T-cell (primary cell): ENCODE measurements at regions of chr2 and their contacts with region 1.

Region 1: DNA sequence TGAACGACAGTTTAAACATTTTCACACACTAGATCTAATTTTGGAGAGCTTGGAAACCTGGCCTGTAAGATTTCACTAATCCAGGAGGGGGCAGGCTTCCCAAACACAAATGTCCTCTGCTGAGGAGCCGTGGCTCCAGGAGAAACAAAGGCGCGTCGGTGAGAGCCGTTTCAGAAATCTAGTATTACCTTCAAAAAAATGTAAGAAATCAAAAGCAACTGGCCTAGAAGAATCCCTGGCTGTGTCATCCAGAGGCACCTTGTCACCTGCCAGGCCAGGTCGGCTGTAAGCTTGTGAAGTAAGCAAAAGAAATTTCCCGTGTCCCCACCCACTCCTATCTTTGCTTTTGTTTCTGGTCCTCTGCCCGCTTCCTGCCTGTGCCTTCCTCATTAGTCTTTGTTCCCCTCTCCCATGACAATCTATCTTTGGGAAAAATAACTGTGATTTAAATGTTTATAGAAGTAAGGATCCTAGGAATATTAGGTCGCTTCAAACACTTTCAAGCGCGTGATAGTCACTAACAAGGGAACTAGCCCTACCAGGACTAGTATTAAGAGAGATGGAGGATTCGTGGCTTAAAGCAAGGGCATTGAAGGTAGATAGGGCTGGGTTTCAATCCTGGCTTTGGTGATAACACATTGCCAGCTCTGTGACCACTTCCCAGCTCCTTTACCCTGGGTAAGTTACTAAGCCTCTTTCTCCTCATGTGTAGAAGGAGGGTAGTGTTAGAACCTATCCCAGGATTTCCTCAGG is 99.5 kb upstream of the STK39 start:
- DNase-seq: peak; percentile 31 to 82 (median 59)
- ATAC-seq: peak; percentile 79 to 90 (median 88)
- H3K4me3 ChIP-seq: peak overlapping the region; percentile 41 to 87
- H3K4me3 Mint-ChIP-seq: peak overlapping the region; percentile 73 to 84 (median 77)
- H3K27ac ChIP-seq: no peak overlapping the region
- H3K27ac Mint-ChIP-seq: peak overlapping the region; percentile 50 to 79
- H3K4me1 ChIP-seq: peaks cover 2 to 3% of the 10 kb centered on the region in 2 experiments
- H3K4me1 Mint-ChIP-seq: peaks cover 7 to 10% (median 9%) of the 10 kb centered on the region in 3 donors
- H3K27me3 ChIP-seq: no peaks in the 10 kb centered on the region
- H3K27me3 Mint-ChIP-seq: peaks cover 0 to 9% of the 10 kb centered on the region in 2 donors

Region 2: DNA sequence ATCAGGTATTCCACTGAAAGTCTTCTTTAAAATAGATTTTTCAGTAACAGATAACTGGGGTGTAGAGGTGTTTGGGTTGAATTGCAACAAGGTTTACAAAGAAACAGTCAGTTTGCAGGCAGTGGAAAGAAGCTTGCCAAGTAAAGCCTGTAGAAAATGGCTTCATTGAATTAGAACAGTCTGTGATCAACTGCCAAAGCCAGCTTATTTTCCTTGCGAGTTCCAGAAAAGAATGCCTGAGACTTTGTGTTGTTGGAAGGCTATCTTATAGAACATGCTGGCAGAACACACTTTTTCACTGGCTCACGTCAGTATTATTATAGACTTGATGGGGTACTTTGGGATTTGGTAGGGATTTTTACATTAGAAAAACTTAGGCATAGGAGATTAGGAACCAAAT is 857.6 kb before region 1 on chr2:
- CTCF ChIA-PET with region 1: no interaction called
- POLR2A ChIA-PET with region 1: no interaction called
- DNase-seq: no peak
- ATAC-seq: no peak
- H3K4me3 ChIP-seq: no peak overlapping the region
- H3K4me3 Mint-ChIP-seq: no peak overlapping the region
- H3K27ac ChIP-seq: no peak overlapping the region
- H3K27ac Mint-ChIP-seq: no peak overlapping the region
- H3K4me1 ChIP-seq: no peaks in the 10 kb centered on the region
- H3K4me1 Mint-ChIP-seq: no peaks in the 10 kb centered on the region
- H3K27me3 ChIP-seq: no peaks in the 10 kb centered on the region
- H3K27me3 Mint-ChIP-seq: no peaks in the 10 kb centered on the region

Region 3: DNA sequence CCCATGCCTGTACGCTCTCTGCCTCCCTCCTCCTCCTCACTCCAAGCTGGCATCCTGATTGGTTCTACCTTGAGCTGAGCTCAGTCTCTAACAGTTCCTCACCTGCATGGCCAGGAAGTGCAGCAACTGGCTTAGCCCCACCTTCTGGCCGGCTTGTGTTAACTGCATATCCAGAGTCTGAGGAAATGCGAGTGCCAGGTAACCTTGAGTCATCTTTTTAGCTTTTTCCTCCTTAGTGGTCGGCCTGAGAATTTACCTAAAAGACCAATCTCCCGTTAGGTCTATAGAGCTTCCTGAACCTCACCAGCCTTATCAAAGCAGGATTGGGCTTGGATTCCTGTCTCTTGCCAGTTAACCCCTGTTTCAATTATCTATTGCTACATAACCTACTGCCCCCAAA is 10.0 kb before region 1 on chr2:
- CTCF ChIA-PET with region 1: interaction called, 9 to 13 read pairs
- POLR2A ChIA-PET with region 1: no interaction called
- DNase-seq: peak; percentile 22 to 70 (median 48)
- ATAC-seq: peak; percentile 92 to 98 (median 93)
- H3K4me3 ChIP-seq: no peak overlapping the region
- H3K4me3 Mint-ChIP-seq: no peak overlapping the region
- H3K27ac ChIP-seq: no peak overlapping the region
- H3K27ac Mint-ChIP-seq: no peak overlapping the region
- H3K4me1 ChIP-seq: no peaks in the 10 kb centered on the region
- H3K4me1 Mint-ChIP-seq: peaks cover 0 to 6% (median 2%) of the 10 kb centered on the region in 3 donors
- H3K27me3 ChIP-seq: no peaks in the 10 kb centered on the region
- H3K27me3 Mint-ChIP-seq: peaks cover 0 to 5% of the 10 kb centered on the region in 2 donors

Region 4: DNA sequence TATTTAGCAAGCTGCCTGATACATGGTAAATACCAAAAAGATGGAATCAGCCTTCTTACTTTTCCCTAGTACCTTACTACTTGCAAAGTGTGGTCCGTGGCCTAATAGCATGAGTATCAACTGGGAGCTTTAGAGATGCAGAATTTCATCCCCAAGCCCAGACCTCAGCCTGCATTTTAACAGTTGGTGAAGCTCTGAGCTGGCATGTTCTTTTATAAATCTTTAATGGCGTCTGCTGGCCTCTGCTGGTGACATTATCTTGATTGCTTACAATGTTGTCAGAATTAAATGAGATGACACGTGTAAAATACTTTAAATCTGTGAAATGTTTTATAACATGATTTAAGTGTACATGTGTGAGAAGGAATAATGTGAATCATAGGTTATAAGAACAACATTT is 340.4 kb after region 1 on chr2:
- CTCF ChIA-PET with region 1: interaction called, 12 to 21 read pairs
- POLR2A ChIA-PET with region 1: no interaction called
- DNase-seq: peak in 19 of 35 experiments; percentile 4 to 41 (median 13)
- ATAC-seq: peak in 1 of 4 experiments; percentile 35
- H3K4me3 ChIP-seq: no peak overlapping the region
- H3K4me3 Mint-ChIP-seq: no peak overlapping the region
- H3K27ac ChIP-seq: no peak overlapping the region
- H3K27ac Mint-ChIP-seq: no peak overlapping the region
- H3K4me1 ChIP-seq: no peaks in the 10 kb centered on the region
- H3K4me1 Mint-ChIP-seq: peaks cover 0 to 8% (median 3%) of the 10 kb centered on the region in 3 donors
- H3K27me3 ChIP-seq: no peaks in the 10 kb centered on the region
- H3K27me3 Mint-ChIP-seq: no peaks in the 10 kb centered on the region

Region 5: GRCh38 chr2:168758970-168759820 is 412.3 kb after region 1 on chr2:
- CTCF ChIA-PET with region 1: interaction called, 4 to 29 read pairs
- POLR2A ChIA-PET with region 1: no interaction called
- DNase-seq: peak in 15 of 35 experiments; percentile 4 to 69 (median 11)
- ATAC-seq: peak in 3 of 4 experiments; percentile 67 to 78 (median 74)
- H3K4me3 ChIP-seq: no peak overlapping the region
- H3K4me3 Mint-ChIP-seq: no peak overlapping the region
- H3K27ac ChIP-seq: no peak overlapping the region
- H3K27ac Mint-ChIP-seq: no peak overlapping the region
- H3K4me1 ChIP-seq: peaks cover 24 to 38% of the 10 kb centered on the region in 2 experiments
- H3K4me1 Mint-ChIP-seq: peaks cover 48 to 51% (median 50%) of the 10 kb centered on the region in 3 donors
- H3K27me3 ChIP-seq: no peaks in the 10 kb centered on the region
- H3K27me3 Mint-ChIP-seq: no peaks in the 10 kb centered on the region

Region 6: GRCh38 chr2:168920504-168921157 is 573.7 kb after region 1 on chr2:
- CTCF ChIA-PET with region 1: interaction called, 4 to 10 read pairs
- POLR2A ChIA-PET with region 1: no interaction called
- DNase-seq: peak in 3 of 35 experiments; percentile 9 to 64 (median 11)
- ATAC-seq: no peak
- H3K4me3 ChIP-seq: no peak overlapping the region
- H3K4me3 Mint-ChIP-seq: no peak overlapping the region
- H3K27ac ChIP-seq: no peak overlapping the region
- H3K27ac Mint-ChIP-seq: no peak overlapping the region
- H3K4me1 ChIP-seq: no peaks in the 10 kb centered on the region
- H3K4me1 Mint-ChIP-seq: peaks cover 4 to 7% (median 5%) of the 10 kb centered on the region in 3 donors
- H3K27me3 ChIP-seq: no peaks in the 10 kb centered on the region
- H3K27me3 Mint-ChIP-seq: peaks cover 18 to 31% of the 10 kb centered on the region in 2 donors